Endothelial cell of umbilical vein (primary cell): ENCODE measurements at regions of chr10 and their contacts with region 1.

Region 1: GRCh38 chr10:1048732-1049424 is at the start of gene IDI1:
- DNase-seq: peak; percentile 98
- H3K4me3 ChIP-seq: peak within 1 kb of the TSS; percentile 60 to 96 (median 86)
- H3K27ac ChIP-seq: peak within 1 kb of the TSS; percentile 74
- H3K4me1 ChIP-seq: peaks cover 39% of the 10 kb centered on the region
- H3K27me3 ChIP-seq: no peaks in the 10 kb centered on the region
- CTCF ChIP-seq: no peak
- POLR2A ChIP-seq: peak; percentile 80
- total RNA-seq, gene IDI1: 63.0 and 63.6 TPM in 2 replicates

Region 2: GRCh38 chr10:931416-932318 is 117.2 kb before region 1 on chr10 and contains the start of gene LARP4B:
- CTCF ChIA-PET with region 1: no interaction called
- POLR2A ChIA-PET with region 1: no interaction called
- dilution Hi-C with region 1: no loop called
- intact Hi-C with region 1: loop called (anchors 1 kb)
- DNase-seq: peak; percentile 98
- H3K4me3 ChIP-seq: peak within 1 kb of the TSS; percentile 28 to 82 (median 77)
- H3K27ac ChIP-seq: peak within 1 kb of the TSS; percentile 67
- H3K4me1 ChIP-seq: peaks cover 12% of the 10 kb centered on the region
- H3K27me3 ChIP-seq: no peaks in the 10 kb centered on the region
- CTCF ChIP-seq: no peak
- POLR2A ChIP-seq: peak; percentile 36
- total RNA-seq, gene LARP4B: 101 TPM in 2 replicates

Region 3: DNA sequence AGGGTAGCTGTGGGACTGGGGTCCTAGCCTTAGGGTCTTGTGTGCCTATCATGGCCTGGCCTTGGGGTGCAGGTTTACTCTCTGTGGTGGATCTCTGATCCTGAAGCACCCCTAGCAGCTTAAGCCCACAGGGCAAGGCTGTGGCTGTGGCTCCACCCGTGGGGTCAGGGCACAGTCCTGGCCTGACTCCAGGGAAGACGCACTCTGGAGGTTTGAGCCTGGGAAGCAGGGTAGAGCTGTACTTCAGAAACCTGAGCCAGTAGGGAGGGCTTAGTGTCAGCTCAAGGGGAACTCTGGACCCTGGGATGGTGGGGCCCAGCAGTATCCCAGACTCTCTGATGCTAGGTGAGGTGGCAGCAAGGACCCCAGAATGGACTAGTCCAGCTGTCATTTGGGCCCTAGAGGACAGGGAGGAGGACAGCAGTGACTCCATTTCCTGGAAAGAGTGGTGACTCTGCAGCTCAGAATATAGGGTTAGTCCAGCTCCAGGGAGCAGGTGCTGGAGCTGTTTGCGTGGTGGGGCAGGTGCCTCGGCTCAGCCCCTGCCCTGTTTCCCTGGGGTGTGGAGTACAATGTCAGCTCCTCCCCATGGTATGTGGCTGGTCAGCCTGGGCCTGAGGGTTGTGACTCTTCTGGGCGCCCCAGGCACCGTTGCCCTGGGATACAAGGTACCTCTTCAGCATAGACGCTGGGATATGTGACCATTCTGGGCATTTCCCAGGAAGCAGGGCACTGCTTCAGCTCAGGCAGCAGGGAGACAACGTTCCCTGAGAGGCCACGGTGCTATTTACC is 44.8 kb before region 1 on chr10:
- CTCF ChIA-PET with region 1: no interaction called
- POLR2A ChIA-PET with region 1: no interaction called
- dilution Hi-C with region 1: no loop called
- intact Hi-C with region 1: no loop called
- DNase-seq: no peak
- H3K4me3 ChIP-seq: no peak overlapping the region
- H3K27ac ChIP-seq: no peak overlapping the region
- H3K4me1 ChIP-seq: no peaks in the 10 kb centered on the region
- H3K27me3 ChIP-seq: no peaks in the 10 kb centered on the region
- CTCF ChIP-seq: no peak
- POLR2A ChIP-seq: no peak

Region 4: DNA sequence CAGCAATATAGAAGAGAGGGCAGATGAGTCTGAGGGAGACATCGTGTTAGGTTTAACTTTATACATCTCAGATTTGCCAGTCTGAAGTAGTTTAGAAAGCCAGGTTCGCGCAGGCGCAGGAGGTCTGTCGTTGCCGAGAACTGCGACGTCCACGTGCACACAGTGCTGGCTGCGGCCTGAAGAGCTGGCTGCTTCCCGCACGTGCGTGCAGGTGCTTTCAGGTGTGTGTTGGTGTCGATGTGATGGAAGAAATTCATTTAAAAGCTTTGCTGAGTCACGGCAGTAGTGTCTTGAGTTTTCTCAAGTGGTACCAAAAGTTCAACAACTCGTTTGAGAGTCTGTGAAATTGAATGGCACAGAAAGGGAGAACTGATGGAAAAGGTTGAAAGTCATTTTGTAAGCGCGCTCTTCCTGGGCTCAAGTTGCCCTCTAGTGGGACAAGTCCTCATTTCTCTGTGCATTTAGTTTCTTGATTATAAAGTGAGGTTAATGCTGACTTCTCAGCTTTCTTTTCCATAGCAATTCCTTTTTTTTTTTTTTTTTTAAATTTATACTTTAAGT is 25.9 kb after region 1 on chr10:
- CTCF ChIA-PET with region 1: interaction called, 12 read pairs
- POLR2A ChIA-PET with region 1: interaction called, 4 read pairs
- dilution Hi-C with region 1: no loop called
- intact Hi-C with region 1: loop called (anchors 2 kb)
- DNase-seq: no peak
- H3K4me3 ChIP-seq: no peak overlapping the region
- H3K27ac ChIP-seq: no peak overlapping the region
- H3K4me1 ChIP-seq: no peaks in the 10 kb centered on the region
- H3K27me3 ChIP-seq: no peaks in the 10 kb centered on the region
- CTCF ChIP-seq: peak; percentile 10 to 28
- POLR2A ChIP-seq: no peak

Region 5: GRCh38 chr10:1240341-1240775 is 191.5 kb after region 1 on chr10:
- CTCF ChIA-PET with region 1: no interaction called
- POLR2A ChIA-PET with region 1: no interaction called
- dilution Hi-C with region 1: no loop called
- intact Hi-C with region 1: no loop called
- DNase-seq: no peak
- H3K4me3 ChIP-seq: no peak overlapping the region
- H3K27ac ChIP-seq: no peak overlapping the region
- H3K4me1 ChIP-seq: no peaks in the 10 kb centered on the region
- H3K27me3 ChIP-seq: peaks cover 0 to 3% of the 10 kb centered on the region in 2 experiments
- CTCF ChIP-seq: no peak
- POLR2A ChIP-seq: no peak